Right cardiac atrium (tissue), 5 donors: ENCODE measurements at regions of chr2 and their contacts with region 1.

Region 1: GRCh38 chr2:229586746-229587705 is 127.3 kb downstream of the DNER start:
- DNase-seq: peak; percentile 81 to 94 (median 88)
- ATAC-seq: peak; percentile 97 to 98
- H3K4me3 ChIP-seq: peak overlapping the region; percentile 21
- H3K27ac ChIP-seq: no peak overlapping the region
- H3K4me1 ChIP-seq: peaks cover 2% of the 10 kb centered on the region
- H3K27me3 ChIP-seq: no peaks in the 10 kb centered on the region

Region 2: DNA sequence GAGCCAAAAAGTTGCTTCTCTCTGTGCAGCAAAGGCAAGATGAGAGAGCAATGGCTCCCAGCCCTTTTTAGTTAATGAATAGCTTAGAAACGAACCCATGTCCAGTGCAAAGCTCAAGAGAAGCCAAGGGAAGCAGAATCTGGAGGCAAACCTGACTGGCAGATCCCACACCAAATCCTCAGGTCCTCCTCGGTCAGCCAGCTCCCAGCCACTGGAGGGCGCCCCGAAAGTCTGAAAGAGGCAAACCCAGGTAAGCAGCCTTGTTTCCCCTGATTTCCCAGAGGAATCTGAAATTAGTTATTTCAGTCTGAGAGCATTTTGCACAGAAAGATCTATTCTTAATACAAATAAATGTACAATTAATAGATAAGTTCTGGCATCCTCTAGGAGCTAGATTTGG is 244.7 kb before region 1 on chr2:
- intact Hi-C with region 1: loop called in 2 of 4 experiments (anchors 10 kb)
- DNase-seq: peak in 2 of 3 donors; percentile 67 to 80
- ATAC-seq: no peak
- H3K4me3 ChIP-seq: no peak overlapping the region
- H3K27ac ChIP-seq: no peak overlapping the region
- H3K4me1 ChIP-seq: no peaks in the 10 kb centered on the region
- H3K27me3 ChIP-seq: no peaks in the 10 kb centered on the region

Region 3: GRCh38 chr2:229431327-229431954 is 155.6 kb before region 1 on chr2:
- intact Hi-C with region 1: loop called (anchors 2 to 10 kb)
- DNase-seq: no peak
- ATAC-seq: peak in 1 of 2 donors; percentile 21
- H3K4me3 ChIP-seq: no peak overlapping the region
- H3K27ac ChIP-seq: peak overlapping the region; percentile 19
- H3K4me1 ChIP-seq: no peaks in the 10 kb centered on the region
- H3K27me3 ChIP-seq: no peaks in the 10 kb centered on the region

Region 4: GRCh38 chr2:229634601-229635370 is 47.8 kb after region 1 on chr2:
- intact Hi-C with region 1: no loop called
- DNase-seq: no peak
- ATAC-seq: no peak
- H3K4me3 ChIP-seq: no peak overlapping the region
- H3K27ac ChIP-seq: no peak overlapping the region
- H3K4me1 ChIP-seq: no peaks in the 10 kb centered on the region
- H3K27me3 ChIP-seq: no peaks in the 10 kb centered on the region

Region 5: DNA sequence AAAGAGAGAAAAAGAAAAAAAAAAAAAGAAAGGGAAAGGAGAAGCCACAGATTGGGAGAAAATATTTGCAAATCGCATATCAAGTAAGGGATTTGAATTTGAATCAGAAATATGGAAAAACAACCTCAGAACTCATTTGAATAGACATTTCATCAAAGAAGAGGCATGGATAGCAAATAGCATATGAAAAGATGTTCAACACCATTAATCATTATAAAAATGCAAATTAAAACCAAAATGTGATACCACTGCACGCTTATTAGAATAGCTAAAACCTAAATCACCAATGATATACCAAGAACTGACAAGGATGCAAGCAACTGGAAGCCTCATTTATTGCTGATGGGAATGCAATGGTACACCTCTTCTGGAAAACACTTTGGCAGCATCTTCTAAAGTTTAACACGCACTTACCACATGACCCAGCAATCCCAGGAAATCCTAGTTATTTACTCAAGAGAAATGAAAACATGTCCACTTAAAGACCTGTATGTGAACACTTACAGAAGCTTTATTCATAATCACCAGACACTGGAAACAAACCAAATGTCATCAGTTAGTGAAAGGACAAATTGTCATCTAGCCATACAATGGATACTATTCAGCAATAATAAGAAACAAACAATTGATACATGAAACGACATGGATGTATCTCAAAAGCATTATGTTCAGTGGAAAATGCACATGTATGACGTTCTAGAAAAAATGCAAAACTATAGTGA is 117.0 kb after region 1 on chr2:
- intact Hi-C with region 1: no loop called
- DNase-seq: no peak
- ATAC-seq: no peak
- H3K4me3 ChIP-seq: no peak overlapping the region
- H3K27ac ChIP-seq: no peak overlapping the region
- H3K4me1 ChIP-seq: peaks cover 2% of the 10 kb centered on the region
- H3K27me3 ChIP-seq: no peaks in the 10 kb centered on the region

Region 6: DNA sequence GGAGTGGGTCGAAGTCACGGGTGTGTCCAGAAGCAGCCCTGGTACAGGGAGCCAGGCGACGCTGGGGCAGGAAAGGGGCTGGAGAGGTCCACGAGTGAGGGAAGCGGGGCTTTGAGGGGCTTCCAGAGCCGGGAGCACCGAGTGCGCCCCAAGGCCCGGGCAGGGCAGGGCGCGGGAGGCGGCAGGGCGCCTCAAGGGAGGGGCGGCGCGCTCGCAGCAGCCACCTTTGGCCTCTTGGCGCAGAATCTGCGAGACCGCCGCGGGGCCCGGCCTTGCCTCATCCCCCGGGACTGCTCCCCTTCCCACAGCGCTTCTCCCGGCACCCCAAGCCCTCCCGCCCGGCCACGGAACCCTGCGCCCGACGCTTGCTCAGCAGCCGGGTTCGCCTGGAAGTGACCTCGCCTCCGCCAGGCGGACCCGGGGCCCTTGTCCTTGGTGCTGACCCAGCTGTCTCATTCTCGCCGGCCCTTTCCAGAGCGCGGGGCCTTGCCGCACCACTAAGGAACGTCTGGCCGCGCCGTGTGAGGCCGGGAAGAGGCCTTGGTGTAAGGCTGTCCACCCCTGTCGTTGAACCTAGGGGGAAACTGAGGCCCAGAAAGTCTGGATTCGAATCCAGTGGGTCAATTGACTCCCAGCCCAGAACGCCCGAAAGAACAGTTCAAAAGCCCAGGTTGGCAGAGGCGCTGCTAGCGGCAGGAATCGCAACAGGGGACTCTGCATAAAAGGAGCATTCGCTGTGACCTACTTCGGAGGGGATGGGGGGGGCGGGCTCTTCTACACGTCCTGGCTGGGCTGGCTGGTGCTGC is 127.9 kb after region 1 on chr2:
- intact Hi-C with region 1: loop called in 1 of 4 experiments (anchors 10 kb)
- DNase-seq: peak; percentile 60 to 85 (median 81)
- ATAC-seq: peak; percentile 80 to 84
- H3K4me3 ChIP-seq: peak overlapping the region; percentile 51
- H3K27ac ChIP-seq: no peak overlapping the region
- H3K4me1 ChIP-seq: no peaks in the 10 kb centered on the region
- H3K27me3 ChIP-seq: no peaks in the 10 kb centered on the region